ENCODE measurements at regions of chr1 and their contacts with region 1.

Region 1: GRCh38 chr1:156212833-156213643 is at the start of gene PMF1:
- DNase-seq: peak; percentile 90
- ATAC-seq: peak; percentile 97
- H3K4me3 ChIP-seq: peak within 1 kb of the TSS; percentile 76 to 94
- H3K27ac ChIP-seq: peak within 1 kb of the TSS; percentile 97
- H3K4me1 ChIP-seq: peaks cover 7% of the 10 kb centered on the region; the same call in 1 of the 2 replicates
- H3K27me3 ChIP-seq: no peaks in the 10 kb centered on the region
- CTCF ChIP-seq: no peak
- total RNA-seq, gene PMF1: 57.5 TPM

Region 2: DNA sequence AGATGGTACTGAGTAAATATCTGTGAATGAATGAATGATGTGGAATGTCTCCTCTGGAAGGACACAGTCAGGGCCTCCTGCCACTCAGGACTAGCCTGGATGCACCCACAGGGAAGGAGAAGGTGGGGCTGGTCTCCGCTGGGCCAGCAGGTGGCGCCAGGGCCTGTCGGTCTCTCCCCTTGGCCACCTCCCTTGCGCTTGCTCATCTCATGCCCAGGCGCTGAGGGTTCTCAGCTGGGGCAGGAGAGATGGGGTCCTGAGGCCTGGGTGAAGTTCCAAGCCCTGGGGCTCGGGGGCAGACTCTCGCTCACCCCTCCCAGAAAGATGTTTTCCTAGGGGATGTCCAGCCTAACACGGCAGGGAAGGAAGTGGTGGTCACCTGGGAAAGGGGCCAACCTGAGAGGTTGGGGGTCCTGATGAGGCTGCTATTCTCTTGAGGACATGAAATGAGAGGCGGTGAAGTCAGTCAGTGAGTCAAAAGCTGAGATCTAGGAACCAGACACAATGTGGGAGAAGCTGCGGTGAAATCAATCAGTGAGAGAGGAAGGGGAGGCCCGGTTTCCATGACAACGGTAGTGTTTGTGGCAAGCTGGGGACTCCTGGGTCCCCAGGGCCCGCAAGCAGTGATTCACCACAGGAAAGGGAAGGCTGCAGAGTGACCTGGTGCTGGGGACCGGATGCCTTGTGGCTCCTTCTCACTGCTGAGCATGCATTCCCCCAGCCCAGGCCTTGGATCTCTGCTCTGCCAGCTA is 116.2 kb before region 1 on chr1:
- CTCF ChIA-PET with region 1: no interaction called
- POLR2A ChIA-PET with region 1: no interaction called
- in situ Hi-C with region 1: no loop called
- intact Hi-C with region 1: loop called (anchors 5 kb)
- DNase-seq: peak; percentile 71
- ATAC-seq: peak; percentile 98
- H3K4me3 ChIP-seq: no peak overlapping the region
- H3K27ac ChIP-seq: peak overlapping the region; percentile 82
- H3K4me1 ChIP-seq: peaks cover 15% of the 10 kb centered on the region; the same call in 1 of the 2 replicates
- H3K27me3 ChIP-seq: no peaks in the 10 kb centered on the region
- CTCF ChIP-seq: peak; percentile 97

Region 3: GRCh38 chr1:156154317-156154749 is 58.7 kb before region 1 on chr1:
- CTCF ChIA-PET with region 1: interaction called, 11 read pairs
- POLR2A ChIA-PET with region 1: no interaction called
- in situ Hi-C with region 1: no loop called
- intact Hi-C with region 1: no loop called
- DNase-seq: no peak
- ATAC-seq: peak; percentile 14; the same call in 1 of the 2 replicates
- H3K4me3 ChIP-seq: no peak overlapping the region
- H3K27ac ChIP-seq: no peak overlapping the region
- H3K4me1 ChIP-seq: no peaks in the 10 kb centered on the region; the same call in 1 of the 2 replicates
- H3K27me3 ChIP-seq: no peaks in the 10 kb centered on the region
- CTCF ChIP-seq: no peak

Region 4: GRCh38 chr1:156241311-156241811 is 28.3 kb after region 1 on chr1:
- CTCF ChIA-PET with region 1: no interaction called
- POLR2A ChIA-PET with region 1: no interaction called
- in situ Hi-C with region 1: no loop called
- intact Hi-C with region 1: no loop called
- DNase-seq: no peak
- ATAC-seq: no peak
- H3K4me3 ChIP-seq: no peak overlapping the region
- H3K27ac ChIP-seq: no peak overlapping the region
- H3K4me1 ChIP-seq: peaks cover 2% of the 10 kb centered on the region
- H3K27me3 ChIP-seq: no peaks in the 10 kb centered on the region
- CTCF ChIP-seq: no peak

Region 5: GRCh38 chr1:156368889-156369684 is 156.0 kb after region 1 on chr1 and contains the start of gene RHBG:
- CTCF ChIA-PET with region 1: no interaction called
- POLR2A ChIA-PET with region 1: no interaction called
- in situ Hi-C with region 1: no loop called
- intact Hi-C with region 1: no loop called
- DNase-seq: no peak
- ATAC-seq: peak; percentile 69
- H3K4me3 ChIP-seq: peak within 1 kb of the TSS; percentile 41 to 52
- H3K27ac ChIP-seq: 0 out of 2 replicates have a peak within 1 kb of the TSS, but pooled peaks have one; percentile 54
- H3K4me1 ChIP-seq: peaks cover 5% of the 10 kb centered on the region; the same call in 1 of the 2 replicates
- H3K27me3 ChIP-seq: no peaks in the 10 kb centered on the region
- CTCF ChIP-seq: no peak
- total RNA-seq, gene RHBG: 0.28 TPM

Region 6: DNA sequence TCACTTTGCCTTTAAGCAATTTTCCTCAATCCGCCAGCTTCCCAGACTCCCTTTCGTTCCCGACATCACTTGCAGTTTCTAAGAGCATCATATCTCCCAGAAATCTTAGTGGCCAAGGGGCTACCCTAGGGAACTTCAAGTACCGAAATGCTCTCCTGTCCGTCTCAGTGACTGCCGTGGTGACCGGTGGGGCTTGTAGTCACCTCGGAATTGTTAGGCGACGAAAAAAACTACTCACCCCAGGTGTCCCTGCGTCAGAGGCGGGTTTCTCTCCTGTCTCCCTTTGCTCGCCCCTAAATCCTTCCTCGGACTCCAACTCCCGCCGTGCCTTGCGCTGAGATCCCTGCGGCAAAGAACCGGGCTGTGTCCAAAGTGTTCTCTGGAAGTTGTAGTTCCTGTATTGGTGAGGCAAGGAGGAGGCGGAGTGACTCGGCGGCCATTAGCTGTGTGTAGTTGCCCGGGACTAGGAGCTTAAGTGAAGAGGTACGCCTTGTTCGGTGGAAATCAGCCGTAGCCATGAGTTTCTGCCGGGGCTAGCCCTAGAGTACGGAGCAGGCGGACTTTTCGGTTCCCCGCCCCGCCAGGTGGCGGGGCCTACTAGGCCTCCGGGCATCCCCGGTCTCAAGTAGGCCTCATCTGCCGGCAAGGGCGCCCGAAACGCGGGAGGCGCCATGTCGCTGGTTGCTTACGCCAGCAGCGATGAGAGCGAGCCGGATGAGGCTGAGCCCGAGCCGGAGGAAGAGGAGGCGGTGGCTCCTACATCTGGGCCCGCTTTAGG is 554.3 kb after region 1 on chr1 and contains the start of gene PRCC:
- CTCF ChIA-PET with region 1: no interaction called
- POLR2A ChIA-PET with region 1: no interaction called
- in situ Hi-C with region 1: no loop called
- intact Hi-C with region 1: no loop called
- DNase-seq: peak; percentile 100
- ATAC-seq: peak; percentile 97
- H3K4me3 ChIP-seq: peak within 1 kb of the TSS; percentile 98 to 99
- H3K27ac ChIP-seq: peak within 1 kb of the TSS; percentile 99
- H3K4me1 ChIP-seq: peaks cover 23% of the 10 kb centered on the region
- H3K27me3 ChIP-seq: no peaks in the 10 kb centered on the region
- CTCF ChIP-seq: no peak
- total RNA-seq, gene PRCC: 78.5 TPM

Measured in Panc1 (cell line).